Gastrocnemius medialis (tissue), 4 donors: ENCODE measurements at regions of chr3 and their contacts with region 1.

Region 1: DNA sequence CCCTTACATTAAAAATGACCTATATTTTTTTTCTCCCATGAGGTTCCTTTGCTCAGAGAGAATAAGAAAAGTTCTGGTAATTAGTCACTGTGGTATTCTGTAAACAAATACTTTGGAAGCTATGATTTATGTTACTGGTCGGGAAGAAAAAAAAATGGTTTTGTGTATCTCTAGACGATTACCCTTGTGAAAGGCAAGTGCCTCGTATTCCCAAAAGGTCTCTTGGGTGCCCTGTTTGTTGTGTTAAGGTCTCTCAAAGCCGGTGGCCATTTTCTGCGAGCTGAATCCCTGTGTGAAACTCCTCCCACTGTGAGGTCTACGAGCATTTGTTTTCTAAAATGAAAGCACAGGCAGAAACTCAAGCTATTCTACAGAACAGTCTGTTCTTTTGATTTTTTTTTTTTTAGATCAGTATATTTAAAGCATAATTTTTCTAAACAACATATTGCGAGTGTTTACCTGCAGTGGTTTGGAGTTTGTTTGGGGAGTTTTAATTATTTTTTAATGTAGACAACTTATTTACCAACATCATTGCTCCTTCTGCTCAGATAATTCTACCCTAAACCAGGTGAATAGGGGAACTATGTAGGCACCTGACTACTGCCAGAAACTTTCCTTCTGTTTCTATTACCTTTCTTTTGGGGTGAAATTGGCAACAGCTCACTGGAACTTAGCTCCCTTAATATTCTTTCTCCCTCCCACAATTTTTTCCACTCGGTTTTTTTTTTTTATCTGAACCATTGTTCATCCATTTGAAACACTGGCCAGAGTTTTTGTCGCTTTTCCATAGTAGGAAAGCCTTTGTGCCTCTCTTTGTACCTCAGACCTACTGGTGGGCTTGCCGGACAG is 44.0 kb downstream of the ZBTB38 start:
- DNase-seq: peak; percentile 70 to 76
- ATAC-seq: peak; percentile 74 to 79
- H3K4me3 ChIP-seq: peak overlapping the region; percentile 41 to 56 (median 49)
- H3K27ac ChIP-seq: peak overlapping the region; percentile 92 to 99 (median 96)
- H3K4me1 ChIP-seq: peaks cover 66 to 69% of the 10 kb centered on the region in 2 donors
- H3K27me3 ChIP-seq: no peaks in the 10 kb centered on the region
- CTCF ChIP-seq: no peak
- POLR2A ChIP-seq: peak; percentile 64 to 65

Region 2: GRCh38 chr3:141114816-141115460 is 297.4 kb before region 1 on chr3:
- in situ Hi-C with region 1: no loop called
- intact Hi-C with region 1: no loop called
- DNase-seq: peak in 1 of 2 donors; percentile 52
- ATAC-seq: peak in 1 of 2 donors; percentile 53
- H3K4me3 ChIP-seq: no peak overlapping the region
- H3K27ac ChIP-seq: peak overlapping the region; percentile 47 to 57 (median 52)
- H3K4me1 ChIP-seq: no peaks in the 10 kb centered on the region
- H3K27me3 ChIP-seq: no peaks in the 10 kb centered on the region
- CTCF ChIP-seq: peak in 2 of 5 experiments; percentile 31 to 36
- POLR2A ChIP-seq: no peak

Region 3: GRCh38 chr3:141425523-141426233 is 13.4 kb after region 1 on chr3:
- in situ Hi-C with region 1: no loop called
- intact Hi-C with region 1: loop called (anchors 1 kb)
- DNase-seq: no peak
- ATAC-seq: no peak
- H3K4me3 ChIP-seq: no peak overlapping the region
- H3K27ac ChIP-seq: peak overlapping the region; percentile 82 to 96 (median 95)
- H3K4me1 ChIP-seq: peaks cover 48 to 58% of the 10 kb centered on the region in 2 donors
- H3K27me3 ChIP-seq: no peaks in the 10 kb centered on the region
- CTCF ChIP-seq: no peak
- POLR2A ChIP-seq: no peak

Region 4: GRCh38 chr3:141431411-141432378 is 19.4 kb after region 1 on chr3:
- in situ Hi-C with region 1: no loop called
- intact Hi-C with region 1: loop called (anchors 1 kb)
- DNase-seq: peak; percentile 77 to 82
- ATAC-seq: peak; percentile 74 to 75
- H3K4me3 ChIP-seq: peak overlapping the region; percentile 43 to 65 (median 57)
- H3K27ac ChIP-seq: peak overlapping the region; percentile 82 to 96 (median 95)
- H3K4me1 ChIP-seq: peaks cover 49 to 67% of the 10 kb centered on the region in 2 donors
- H3K27me3 ChIP-seq: no peaks in the 10 kb centered on the region
- CTCF ChIP-seq: no peak
- POLR2A ChIP-seq: peak; percentile 72 to 76